AG04449 (cell line): ENCODE measurements at regions of chr1 and their contacts with region 1.

Region 1: GRCh38 chr1:53485478-53486394 is 26.5 kb downstream of the DMRTB1 start:
- DNase-seq: no peak
- H3K4me3 ChIP-seq: no peak overlapping the region; the same call in 1 of the 2 replicates
- CTCF ChIP-seq: peak; percentile 93

Region 2: GRCh38 chr1:53470155-53470554 is 15.6 kb before region 1 on chr1:
- CTCF ChIA-PET with region 1: interaction called, 54 read pairs
- POLR2A ChIA-PET with region 1: no interaction called
- DNase-seq: no peak
- H3K4me3 ChIP-seq: no peak overlapping the region
- CTCF ChIP-seq: peak; percentile 86

Region 3: DNA sequence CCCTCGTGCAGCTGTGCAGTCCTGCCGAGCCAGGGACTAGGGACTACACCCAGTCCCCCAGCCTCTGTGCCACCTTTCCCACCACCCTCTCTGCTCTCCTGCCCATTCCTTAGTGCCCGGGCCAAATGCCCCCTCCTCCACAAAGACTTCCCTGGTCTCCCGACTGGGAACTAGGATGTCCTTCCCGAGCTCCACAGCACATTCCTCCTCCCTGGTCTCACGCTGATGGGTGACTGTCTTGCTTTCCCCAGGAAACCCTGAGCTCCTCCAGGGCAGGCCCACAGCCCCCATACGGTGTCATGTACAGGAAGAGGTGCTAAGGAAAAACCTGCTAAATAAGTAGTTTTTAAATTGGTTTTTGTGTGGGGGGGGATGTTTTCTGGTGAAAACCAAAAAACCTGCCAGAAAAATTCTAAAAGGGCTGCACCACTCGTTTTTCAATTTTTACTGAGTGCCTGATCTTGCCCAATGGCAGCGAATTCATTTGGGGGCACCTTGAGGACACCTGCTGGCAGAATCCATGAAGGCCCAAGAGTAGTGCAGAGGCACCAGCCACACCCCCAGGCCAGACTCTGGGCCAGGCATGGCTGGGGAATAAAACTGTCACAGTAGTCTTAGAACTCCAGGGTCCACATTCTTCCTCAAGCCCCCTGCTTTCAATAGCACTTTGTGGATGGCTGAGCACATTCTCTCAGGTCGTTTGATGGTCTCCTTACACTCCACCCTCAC is 202.8 kb after region 1 on chr1:
- CTCF ChIA-PET with region 1: interaction called, 10 read pairs
- POLR2A ChIA-PET with region 1: no interaction called
- DNase-seq: no peak
- H3K4me3 ChIP-seq: no peak overlapping the region
- CTCF ChIP-seq: no peak

Region 4: DNA sequence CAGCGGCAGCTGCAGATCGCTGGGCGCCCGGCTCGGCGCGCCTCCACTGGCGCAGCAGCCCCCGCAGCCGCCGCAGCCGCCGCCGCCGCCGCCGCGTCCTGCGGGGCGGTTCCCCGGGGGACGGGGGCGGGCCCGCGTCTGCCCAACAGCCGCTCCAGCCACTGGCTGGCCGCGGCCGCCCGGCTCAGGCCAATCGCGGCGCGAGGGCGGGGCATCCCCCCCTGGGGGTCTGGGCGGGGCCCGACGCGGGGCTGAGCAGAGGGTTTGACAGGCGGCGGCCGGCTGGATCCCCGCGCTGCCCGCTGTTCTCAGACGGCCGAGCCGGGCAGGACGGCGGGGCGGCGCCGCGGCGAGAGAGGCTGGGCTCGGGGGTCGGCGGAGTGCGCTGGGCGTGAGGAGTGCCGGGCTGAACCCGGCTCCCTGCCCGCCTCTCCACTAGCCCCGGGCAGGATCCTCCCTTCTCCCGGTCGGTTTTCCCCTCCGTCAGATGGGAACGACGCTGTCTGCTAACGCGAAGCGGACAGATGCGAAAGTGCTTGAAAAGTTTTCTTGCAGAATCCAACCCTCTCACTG is 253.5 kb after region 1 on chr1 and contains the start of gene GLIS1:
- CTCF ChIA-PET with region 1: interaction called, 15 read pairs
- POLR2A ChIA-PET with region 1: no interaction called
- DNase-seq: no peak
- H3K4me3 ChIP-seq: peak within 1 kb of the TSS; percentile 82
- CTCF ChIP-seq: no peak

Region 5: DNA sequence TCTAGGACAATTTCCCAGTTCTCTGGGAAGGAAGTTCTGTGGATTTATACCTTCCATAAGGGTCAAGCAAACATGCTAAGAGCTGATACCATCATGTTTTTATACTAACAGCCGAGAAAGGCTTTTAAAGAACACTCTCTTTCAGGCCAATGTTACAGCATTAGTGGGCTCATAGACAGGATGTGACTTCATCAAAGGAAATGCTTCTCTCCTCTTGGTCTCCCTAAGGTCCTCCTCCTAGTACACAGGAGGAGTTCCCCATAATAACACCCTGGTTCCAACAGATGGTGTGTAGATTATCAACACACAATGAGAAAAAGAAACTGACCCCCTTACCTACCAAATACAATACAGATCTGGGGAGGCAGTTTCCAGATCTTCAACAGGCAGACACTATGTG is 279.9 kb after region 1 on chr1:
- CTCF ChIA-PET with region 1: interaction called, 58 read pairs
- POLR2A ChIA-PET with region 1: no interaction called
- DNase-seq: peak; percentile 14
- H3K4me3 ChIP-seq: no peak overlapping the region
- CTCF ChIP-seq: no peak